Mammary epithelial cell (primary cell): ENCODE measurements at regions of chr11 and their contacts with region 1.

Region 1: DNA sequence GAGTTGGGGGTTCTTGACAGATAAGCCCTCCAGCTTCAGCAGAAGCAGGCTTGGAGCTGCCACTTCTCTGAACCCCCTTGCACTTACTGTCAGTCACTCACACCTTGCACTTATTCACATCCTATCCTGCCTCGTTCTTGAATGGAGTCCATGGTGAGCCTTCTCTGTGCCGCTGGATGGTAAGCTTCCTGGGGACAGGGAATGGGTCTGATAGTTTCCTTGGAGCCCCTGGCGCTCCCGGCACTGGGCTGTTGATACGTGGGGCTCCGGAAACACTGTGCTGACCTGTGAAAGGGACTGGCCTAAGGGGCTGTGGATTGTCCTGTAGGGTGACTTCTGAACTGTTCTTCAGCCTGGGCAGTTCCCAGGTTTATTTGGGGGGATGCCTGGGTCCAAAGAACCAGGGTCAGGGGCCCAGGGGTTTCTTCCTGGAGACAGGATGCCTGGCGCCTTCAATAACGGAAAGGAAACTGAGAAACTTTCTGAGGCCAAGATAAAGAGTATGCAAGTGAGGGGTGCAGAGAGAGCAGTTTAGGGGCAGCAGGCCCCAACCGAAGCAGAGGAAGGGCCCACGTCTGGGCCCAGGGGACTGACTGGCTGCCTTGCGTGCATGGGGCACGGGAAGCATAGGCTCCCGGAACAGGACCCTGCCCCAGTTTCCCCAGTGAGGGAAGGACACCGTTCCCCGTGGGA is 709 bp upstream of the ST3GAL4 start:
- DNase-seq: no peak
- H3K4me3 ChIP-seq: peak overlapping the region; percentile 84 to 89 (median 88)
- H3K27ac ChIP-seq: peak overlapping the region; percentile 76
- H3K4me1 ChIP-seq: peaks cover 43% of the 10 kb centered on the region
- H3K27me3 ChIP-seq: no peaks in the 10 kb centered on the region
- CTCF ChIP-seq: no peak

Region 2: GRCh38 chr11:125300791-125301218 is 1054.0 kb before region 1 on chr11:
- CTCF ChIA-PET with region 1: no interaction called
- dilution Hi-C with region 1: no loop called
- in situ Hi-C with region 1: no loop called
- intact Hi-C with region 1: no loop called
- DNase-seq: peak; percentile 82
- H3K4me3 ChIP-seq: no peak overlapping the region
- H3K27ac ChIP-seq: no peak overlapping the region
- H3K4me1 ChIP-seq: peaks cover 11% of the 10 kb centered on the region
- H3K27me3 ChIP-seq: no peaks in the 10 kb centered on the region
- CTCF ChIP-seq: no peak

Region 3: GRCh38 chr11:126310228-126310991 is 44.4 kb before region 1 on chr11:
- CTCF ChIA-PET with region 1: no interaction called
- dilution Hi-C with region 1: no loop called
- in situ Hi-C with region 1: no loop called
- intact Hi-C with region 1: loop called (anchors 2 kb)
- DNase-seq: peak; percentile 50
- H3K4me3 ChIP-seq: no peak overlapping the region
- H3K27ac ChIP-seq: no peak overlapping the region
- H3K4me1 ChIP-seq: peaks cover 22% of the 10 kb centered on the region
- H3K27me3 ChIP-seq: no peaks in the 10 kb centered on the region
- CTCF ChIP-seq: peak; percentile 86 to 93

Region 4: DNA sequence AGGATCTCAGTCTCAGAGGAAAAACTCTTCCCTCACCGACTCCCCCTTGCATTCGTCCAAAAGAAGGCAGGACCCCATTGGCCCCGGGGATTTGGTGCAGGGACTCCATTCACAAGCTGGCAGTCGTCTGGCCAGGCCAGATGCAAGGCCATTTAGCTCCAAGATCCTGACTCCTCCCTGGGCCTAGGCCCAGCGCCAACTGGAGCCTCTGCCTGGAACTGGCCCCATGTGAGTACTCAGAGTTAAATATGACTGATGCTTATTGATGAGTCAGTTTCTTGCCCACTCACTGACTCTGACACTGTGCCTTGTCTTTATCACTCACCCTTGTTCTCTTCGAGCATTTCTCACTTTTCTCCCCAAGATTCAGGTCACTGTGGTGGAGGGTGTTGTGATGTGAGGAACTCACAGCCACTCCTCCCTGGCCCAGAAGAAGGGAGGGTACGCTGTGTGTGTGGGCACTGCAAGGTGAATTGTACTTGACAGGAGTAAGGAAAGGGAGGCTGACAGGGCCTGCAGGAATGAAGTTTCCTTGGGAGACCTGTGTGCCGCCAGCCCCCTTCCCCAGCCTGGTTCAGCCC is 22.6 kb before region 1 on chr11:
- CTCF ChIA-PET with region 1: no interaction called
- dilution Hi-C with region 1: no loop called
- in situ Hi-C with region 1: no loop called
- intact Hi-C with region 1: loop called (anchors 1 kb)
- DNase-seq: peak; percentile 82
- H3K4me3 ChIP-seq: no peak overlapping the region
- H3K27ac ChIP-seq: peak overlapping the region; percentile 15
- H3K4me1 ChIP-seq: peaks cover 13% of the 10 kb centered on the region
- H3K27me3 ChIP-seq: no peaks in the 10 kb centered on the region
- CTCF ChIP-seq: no peak

Region 5: GRCh38 chr11:126391970-126392639 is 37.3 kb after region 1 on chr11:
- CTCF ChIA-PET with region 1: no interaction called
- dilution Hi-C with region 1: loop called (anchors 5 kb)
- in situ Hi-C with region 1: no loop called
- intact Hi-C with region 1: loop called (anchors 5 kb)
- DNase-seq: peak; percentile 73
- H3K4me3 ChIP-seq: no peak overlapping the region
- H3K27ac ChIP-seq: no peak overlapping the region
- H3K4me1 ChIP-seq: peaks cover 39% of the 10 kb centered on the region
- H3K27me3 ChIP-seq: no peaks in the 10 kb centered on the region
- CTCF ChIP-seq: no peak